ENCODE measurements at regions of chr17 and their contacts with region 1.

Region 1: DNA sequence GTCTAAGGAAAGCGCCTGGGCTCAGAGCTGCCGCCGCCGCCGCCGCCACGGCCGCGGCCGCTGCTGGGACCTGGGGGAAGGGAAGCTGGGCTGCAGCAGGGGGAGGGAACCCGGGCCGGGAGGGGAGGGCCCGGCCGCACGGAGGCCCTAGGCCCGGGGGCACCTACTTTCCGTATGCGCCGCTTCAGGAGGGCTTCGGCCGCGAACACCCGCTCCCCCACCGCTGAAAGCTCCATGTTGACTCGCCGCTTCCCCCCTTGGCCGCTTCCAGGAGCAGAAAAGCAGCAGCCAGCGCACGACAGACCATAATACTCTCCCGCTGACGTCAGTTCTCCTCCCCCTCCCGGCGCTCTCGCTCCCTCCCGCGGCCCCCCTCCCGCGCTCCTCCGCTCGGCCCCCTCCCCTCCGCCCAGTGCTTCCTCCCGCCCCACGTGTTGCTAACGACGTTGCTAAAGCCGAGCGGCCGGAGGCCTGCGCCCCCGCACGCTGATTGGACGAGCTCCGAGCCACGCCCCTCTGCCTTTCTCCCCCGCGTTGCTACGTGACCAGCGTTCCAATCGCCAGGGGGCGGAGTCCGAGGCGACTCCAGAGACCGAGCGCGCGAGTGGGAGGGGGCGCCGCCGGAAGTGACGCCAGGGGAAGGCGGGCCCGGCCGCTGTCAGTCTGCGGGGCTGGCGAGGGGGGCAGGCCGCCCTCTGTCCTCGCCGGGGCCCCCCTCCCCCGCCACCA is at the start of gene CBX8:
- DNase-seq: peak; percentile 99
- ATAC-seq: peak; percentile 88 to 97 (median 91)
- H3K4me3 ChIP-seq: peak within 1 kb of the TSS; percentile 66
- H3K4me3 Mint-ChIP-seq: peak within 1 kb of the TSS; percentile 91
- H3K27ac ChIP-seq: peak within 1 kb of the TSS; percentile 73
- H3K27ac Mint-ChIP-seq: peak within 1 kb of the TSS; percentile 75 to 90
- H3K4me1 ChIP-seq: peaks cover 53% of the 10 kb centered on the region
- H3K4me1 Mint-ChIP-seq: peaks cover 31 to 38% of the 10 kb centered on the region in 2 donors
- H3K27me3 ChIP-seq: peaks cover 51% of the 10 kb centered on the region
- H3K27me3 Mint-ChIP-seq: peaks cover 25 to 40% of the 10 kb centered on the region in 2 donors
- CTCF ChIP-seq: no peak
- total RNA-seq, gene CBX8: 4.0 to 6.4 (median 5.8) TPM

Region 2: GRCh38 chr17:79749156-79749815 is 47.6 kb before region 1 on chr17:
- intact Hi-C with region 1: loop called (anchors 5 kb)
- DNase-seq: no peak
- ATAC-seq: no peak
- H3K4me3 ChIP-seq: no peak overlapping the region
- H3K4me3 Mint-ChIP-seq: no peak overlapping the region
- H3K27ac ChIP-seq: no peak overlapping the region
- H3K27ac Mint-ChIP-seq: no peak overlapping the region
- H3K4me1 ChIP-seq: peaks cover 13% of the 10 kb centered on the region
- H3K4me1 Mint-ChIP-seq: peaks cover 7 to 12% of the 10 kb centered on the region in 2 donors
- H3K27me3 ChIP-seq: peaks cover 31% of the 10 kb centered on the region
- H3K27me3 Mint-ChIP-seq: peaks cover 19 to 22% of the 10 kb centered on the region in 2 donors
- CTCF ChIP-seq: no peak

Region 3: GRCh38 chr17:79777894-79778503 is 18.9 kb before region 1 on chr17 and contains the start of gene CBX2:
- intact Hi-C with region 1: no loop called
- DNase-seq: peak; percentile 78 to 88
- ATAC-seq: peak; percentile 88 to 95 (median 92)
- H3K4me3 ChIP-seq: peak within 1 kb of the TSS; percentile 28
- H3K4me3 Mint-ChIP-seq: peak within 1 kb of the TSS; percentile 91
- H3K27ac ChIP-seq: no peak within 1 kb of the TSS
- H3K27ac Mint-ChIP-seq: peak within 1 kb of the TSS; percentile 69 to 84
- H3K4me1 ChIP-seq: peaks cover 18% of the 10 kb centered on the region
- H3K4me1 Mint-ChIP-seq: peaks cover 13% of the 10 kb centered on the region in 2 donors
- H3K27me3 ChIP-seq: peaks cover 40% of the 10 kb centered on the region
- H3K27me3 Mint-ChIP-seq: peaks cover 64 to 73% of the 10 kb centered on the region in 2 donors
- CTCF ChIP-seq: no peak
- total RNA-seq, gene CBX2: 0.18 to 1.3 TPM in 2 of 3 donors, not detected in the other

Region 4: DNA sequence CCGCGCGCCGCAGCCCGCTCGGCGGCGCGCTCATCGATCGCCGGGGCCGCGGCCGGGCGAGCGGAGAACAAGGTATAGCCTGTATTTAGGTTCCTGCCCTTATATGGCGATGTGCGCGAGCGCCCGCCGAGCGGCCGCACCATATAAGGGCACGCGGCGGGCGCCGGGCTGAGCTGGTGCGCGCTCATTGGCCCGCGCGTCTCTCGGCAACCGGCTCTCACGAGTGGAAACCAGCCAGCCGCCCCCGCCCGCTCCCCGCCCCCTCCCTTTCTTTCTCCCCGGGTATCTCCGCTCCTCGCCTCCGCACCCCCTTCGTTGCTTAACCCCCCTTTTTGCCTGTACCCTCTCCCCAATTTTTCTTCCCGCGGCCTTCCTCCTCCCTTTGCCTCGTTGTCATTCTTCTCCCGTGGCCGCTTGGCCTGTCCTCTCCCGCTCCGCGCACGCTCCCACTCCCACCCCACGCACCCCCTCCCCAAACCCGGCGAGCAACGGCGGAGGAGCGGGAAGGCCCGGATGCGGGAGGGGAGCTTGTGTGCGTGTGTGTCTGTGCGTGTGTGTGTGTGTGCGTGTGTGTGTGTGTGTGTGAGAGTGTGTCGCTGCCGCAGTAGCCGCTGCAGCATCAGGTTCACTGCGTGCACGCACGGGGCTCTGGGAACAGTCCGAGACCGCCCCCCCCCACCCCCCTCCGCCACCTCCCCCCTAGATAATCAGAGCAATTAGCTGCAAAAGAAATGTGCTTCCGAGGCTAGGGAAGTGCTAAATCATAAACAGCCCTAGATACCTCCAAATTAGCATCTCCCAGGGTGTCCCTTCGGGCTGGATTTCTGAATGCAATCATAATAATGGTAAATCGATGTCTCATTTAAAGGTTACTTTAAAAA is 13.4 kb after region 1 on chr17:
- intact Hi-C with region 1: loop called (anchors 2 kb)
- DNase-seq: peak; percentile 63 to 91
- ATAC-seq: peak; percentile 89 to 95 (median 94)
- H3K4me3 ChIP-seq: no peak overlapping the region
- H3K4me3 Mint-ChIP-seq: peak overlapping the region; percentile 31
- H3K27ac ChIP-seq: no peak overlapping the region
- H3K27ac Mint-ChIP-seq: peak overlapping the region in 1 of 2 donors; percentile 45
- H3K4me1 ChIP-seq: peaks cover 52% of the 10 kb centered on the region
- H3K4me1 Mint-ChIP-seq: peaks cover 12 to 27% of the 10 kb centered on the region in 2 donors
- H3K27me3 ChIP-seq: peaks cover 81% of the 10 kb centered on the region
- H3K27me3 Mint-ChIP-seq: peaks cover 50 to 54% of the 10 kb centered on the region in 2 donors
- CTCF ChIP-seq: no peak

Region 5: GRCh38 chr17:79839363-79840268 is 42.7 kb after region 1 on chr17 and contains the start of gene CBX4:
- intact Hi-C with region 1: loop called (anchors 2 kb)
- DNase-seq: peak; percentile 84 to 95
- ATAC-seq: peak; percentile 73 to 89 (median 81)
- H3K4me3 ChIP-seq: peak within 1 kb of the TSS; percentile 82
- H3K4me3 Mint-ChIP-seq: peak within 1 kb of the TSS; percentile 94
- H3K27ac ChIP-seq: peak within 1 kb of the TSS; percentile 67
- H3K27ac Mint-ChIP-seq: peak within 1 kb of the TSS; percentile 87 to 96
- H3K4me1 ChIP-seq: peaks cover 79% of the 10 kb centered on the region
- H3K4me1 Mint-ChIP-seq: peaks cover 35 to 57% of the 10 kb centered on the region in 2 donors
- H3K27me3 ChIP-seq: peaks cover 36% of the 10 kb centered on the region
- H3K27me3 Mint-ChIP-seq: peaks cover 12 to 21% of the 10 kb centered on the region in 2 donors
- CTCF ChIP-seq: peak; percentile 62
- total RNA-seq, gene CBX4: 147 to 220 (median 217) TPM

Region 6: DNA sequence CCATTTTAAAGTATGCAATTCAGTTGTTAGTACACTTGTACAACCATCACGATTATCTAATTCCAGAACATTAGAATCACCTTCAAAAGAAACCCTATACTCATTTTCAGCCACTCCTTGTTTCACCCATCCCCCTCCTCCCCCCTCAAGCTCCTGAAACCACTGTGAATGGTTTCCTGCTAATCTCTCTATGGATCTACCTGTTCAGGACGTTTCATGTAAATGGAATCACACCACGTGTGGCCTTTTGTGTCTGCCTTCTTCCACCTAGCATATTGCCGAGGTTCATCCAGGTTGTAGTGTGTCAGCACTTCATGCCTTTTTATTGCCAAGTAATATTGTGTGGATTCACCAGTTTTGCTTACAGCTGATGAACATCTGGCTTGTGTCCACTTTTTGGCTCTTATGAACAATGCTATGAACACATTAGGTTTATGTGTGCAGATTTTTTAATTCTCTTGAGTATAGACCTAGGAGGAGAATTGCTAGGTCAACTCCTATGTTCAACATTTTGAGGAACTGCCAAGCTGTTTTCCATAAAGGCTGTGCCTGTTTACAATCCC is 332.2 kb after region 1 on chr17:
- intact Hi-C with region 1: no loop called
- DNase-seq: no peak
- ATAC-seq: no peak
- H3K4me3 ChIP-seq: no peak overlapping the region
- H3K4me3 Mint-ChIP-seq: no peak overlapping the region
- H3K27ac ChIP-seq: no peak overlapping the region
- H3K27ac Mint-ChIP-seq: no peak overlapping the region
- H3K4me1 ChIP-seq: no peaks in the 10 kb centered on the region
- H3K4me1 Mint-ChIP-seq: no peaks in the 10 kb centered on the region
- H3K27me3 ChIP-seq: no peaks in the 10 kb centered on the region
- H3K27me3 Mint-ChIP-seq: peaks cover 4 to 27% of the 10 kb centered on the region in 2 donors
- CTCF ChIP-seq: no peak

Region 7: DNA sequence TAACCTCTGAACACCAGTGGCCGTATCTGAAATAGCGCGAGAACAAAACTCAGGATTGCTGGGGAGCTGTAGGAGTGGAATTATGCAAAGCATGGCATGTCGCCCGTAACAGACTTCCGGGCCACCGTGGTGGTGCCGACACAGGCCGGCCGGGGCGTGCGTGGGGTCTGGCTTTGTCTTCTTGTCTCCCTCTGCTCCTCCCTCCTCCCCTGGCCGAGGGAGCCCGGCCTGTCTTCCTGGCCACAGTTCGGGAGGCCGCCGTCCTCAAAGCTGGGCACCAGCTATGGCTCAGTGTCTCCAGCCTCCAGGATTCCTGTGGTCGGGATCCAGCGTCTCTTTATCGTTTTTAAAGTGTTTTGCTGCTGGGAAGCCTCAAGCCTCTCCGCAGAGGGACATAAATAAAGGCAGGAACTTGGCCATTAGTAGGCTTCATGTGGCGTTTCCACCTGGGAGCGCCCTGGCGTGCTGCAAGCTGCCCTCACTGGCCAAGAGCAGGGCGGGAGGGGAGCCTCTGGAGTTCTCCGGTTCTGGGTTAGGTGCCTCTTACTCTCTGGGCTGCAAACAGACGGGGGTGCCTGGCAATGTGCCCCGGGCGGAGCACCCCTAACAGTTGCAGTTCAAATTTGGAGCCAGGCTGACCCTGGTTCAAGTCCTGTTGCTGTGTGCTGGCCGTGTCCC is 701.5 kb after region 1 on chr17:
- intact Hi-C with region 1: no loop called
- DNase-seq: no peak
- ATAC-seq: no peak
- H3K4me3 ChIP-seq: no peak overlapping the region
- H3K4me3 Mint-ChIP-seq: no peak overlapping the region
- H3K27ac ChIP-seq: no peak overlapping the region
- H3K27ac Mint-ChIP-seq: no peak overlapping the region
- H3K4me1 ChIP-seq: no peaks in the 10 kb centered on the region
- H3K4me1 Mint-ChIP-seq: peaks cover 0 to 6% of the 10 kb centered on the region in 2 donors
- H3K27me3 ChIP-seq: peaks cover 3% of the 10 kb centered on the region
- H3K27me3 Mint-ChIP-seq: peaks cover 6 to 7% of the 10 kb centered on the region in 2 donors
- CTCF ChIP-seq: no peak